ENCODE measurements at regions of chr1 and their contacts with region 1.

Region 1: DNA sequence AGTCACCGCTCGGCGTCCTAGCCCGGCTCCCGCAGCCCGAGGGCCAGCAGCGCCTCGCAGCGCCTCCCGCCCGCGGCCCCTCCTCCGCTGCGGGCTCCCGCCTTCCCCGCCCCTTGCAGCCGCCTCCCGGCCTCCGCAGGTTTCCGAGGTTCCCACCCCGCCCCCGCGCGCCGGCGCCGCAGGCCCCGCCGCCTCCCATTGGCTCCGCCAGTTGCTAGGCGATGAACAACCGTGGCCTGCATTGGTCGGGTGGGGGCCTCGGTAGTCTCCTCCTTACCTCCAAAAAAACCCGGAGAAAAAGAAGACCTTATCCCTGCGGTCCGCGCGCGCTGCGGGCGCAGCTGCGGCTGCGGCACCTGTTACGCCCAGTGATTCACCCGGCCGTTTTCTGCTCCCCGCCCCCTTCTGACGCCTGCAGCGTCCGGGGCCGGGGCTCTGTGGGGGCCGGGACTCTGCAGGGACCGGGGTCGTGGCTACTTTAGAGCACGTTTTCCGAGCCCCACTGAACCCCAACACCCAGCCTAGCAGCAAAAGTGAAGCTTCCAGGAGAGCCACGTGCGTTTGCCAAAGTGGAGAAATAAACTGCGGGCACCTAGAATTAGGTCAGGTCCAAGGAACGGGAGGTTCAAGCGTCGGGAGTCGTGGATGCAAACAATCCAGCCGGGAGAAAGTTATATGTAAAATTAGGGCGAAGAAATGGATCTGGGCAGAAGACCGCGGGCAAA is at the start of gene SSX2IP:
- DNase-seq: peak; percentile 99 to 100 (median 100)
- ATAC-seq: peak; percentile 82
- H3K4me3 ChIP-seq: peak within 1 kb of the TSS; percentile 84
- H3K4me3 Mint-ChIP-seq: peak within 1 kb of the TSS; percentile 91
- H3K27ac ChIP-seq: peak within 1 kb of the TSS; percentile 76 to 83
- H3K27ac Mint-ChIP-seq: peak within 1 kb of the TSS; percentile 88
- H3K4me1 ChIP-seq: peaks cover 29% of the 10 kb centered on the region
- H3K4me1 Mint-ChIP-seq: peaks cover 77% of the 10 kb centered on the region
- H3K27me3 ChIP-seq: no peaks in the 10 kb centered on the region
- H3K27me3 Mint-ChIP-seq: no peaks in the 10 kb centered on the region
- CTCF ChIP-seq: no peak
- total RNA-seq, gene SSX2IP: 5.5 to 6.0 TPM

Region 2: DNA sequence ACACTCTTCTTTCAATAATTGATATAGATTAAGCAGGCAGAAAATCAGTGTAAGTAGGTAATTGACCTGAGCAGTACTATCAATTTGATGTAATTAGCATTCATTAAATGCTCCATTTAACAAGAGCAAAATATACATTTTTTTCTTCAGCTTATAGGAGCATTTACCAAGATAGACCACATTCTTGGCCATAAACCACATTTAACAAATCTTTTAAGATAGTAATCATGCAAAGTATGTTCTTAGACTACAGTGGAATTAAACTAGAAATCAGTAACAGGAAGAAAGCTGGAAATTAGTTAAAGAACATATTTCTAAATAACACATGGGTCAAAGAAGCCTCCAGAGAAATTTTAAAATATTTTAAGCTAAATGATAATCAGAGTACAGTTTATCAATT is 555.2 kb before region 1 on chr1:
- CTCF ChIA-PET with region 1: no interaction called
- POLR2A ChIA-PET with region 1: no interaction called
- intact Hi-C with region 1: loop called (anchors 5 to 10 kb)
- DNase-seq: no peak
- ATAC-seq: no peak
- H3K4me3 ChIP-seq: no peak overlapping the region
- H3K4me3 Mint-ChIP-seq: no peak overlapping the region
- H3K27ac ChIP-seq: no peak overlapping the region
- H3K27ac Mint-ChIP-seq: no peak overlapping the region
- H3K4me1 ChIP-seq: no peaks in the 10 kb centered on the region
- H3K4me1 Mint-ChIP-seq: peaks cover 13% of the 10 kb centered on the region
- H3K27me3 ChIP-seq: no peaks in the 10 kb centered on the region
- H3K27me3 Mint-ChIP-seq: no peaks in the 10 kb centered on the region
- CTCF ChIP-seq: no peak

Region 3: GRCh38 chr1:84478876-84479868 is 211.4 kb before region 1 on chr1 and contains the start of gene RPF1:
- CTCF ChIA-PET with region 1: no interaction called
- POLR2A ChIA-PET with region 1: no interaction called
- intact Hi-C with region 1: loop called in 1 of 2 experiments (anchors 10 kb)
- DNase-seq: peak; percentile 58 to 91 (median 74)
- ATAC-seq: peak; percentile 93
- H3K4me3 ChIP-seq: peak within 1 kb of the TSS; percentile 84
- H3K4me3 Mint-ChIP-seq: peak within 1 kb of the TSS; percentile 97
- H3K27ac ChIP-seq: peak within 1 kb of the TSS; percentile 82 to 85
- H3K27ac Mint-ChIP-seq: peak within 1 kb of the TSS; percentile 95
- H3K4me1 ChIP-seq: peaks cover 13% of the 10 kb centered on the region
- H3K4me1 Mint-ChIP-seq: peaks cover 53% of the 10 kb centered on the region
- H3K27me3 ChIP-seq: peaks cover 3 to 12% of the 10 kb centered on the region in 2 experiments
- H3K27me3 Mint-ChIP-seq: peaks cover 33% of the 10 kb centered on the region
- CTCF ChIP-seq: no peak
- total RNA-seq, gene RPF1: 67.6 to 69.4 TPM

Region 4: GRCh38 chr1:84573967-84574842 is 116.4 kb before region 1 on chr1 and contains the start of gene CTBS:
- CTCF ChIA-PET with region 1: no interaction called
- POLR2A ChIA-PET with region 1: interaction called, 8 read pairs
- intact Hi-C with region 1: loop called (anchors 2 to 5 kb)
- DNase-seq: peak; percentile 74 to 94 (median 83)
- ATAC-seq: peak; percentile 88
- H3K4me3 ChIP-seq: peak within 1 kb of the TSS; percentile 85
- H3K4me3 Mint-ChIP-seq: peak within 1 kb of the TSS; percentile 99
- H3K27ac ChIP-seq: peak within 1 kb of the TSS; percentile 95 to 97
- H3K27ac Mint-ChIP-seq: peak within 1 kb of the TSS; percentile 100
- H3K4me1 ChIP-seq: peaks cover 22% of the 10 kb centered on the region
- H3K4me1 Mint-ChIP-seq: peaks cover 48% of the 10 kb centered on the region
- H3K27me3 ChIP-seq: peaks cover 0 to 3% of the 10 kb centered on the region in 2 experiments
- H3K27me3 Mint-ChIP-seq: no peaks in the 10 kb centered on the region
- CTCF ChIP-seq: no peak
- total RNA-seq, gene CTBS: 19.4 to 20.0 TPM

Region 5: DNA sequence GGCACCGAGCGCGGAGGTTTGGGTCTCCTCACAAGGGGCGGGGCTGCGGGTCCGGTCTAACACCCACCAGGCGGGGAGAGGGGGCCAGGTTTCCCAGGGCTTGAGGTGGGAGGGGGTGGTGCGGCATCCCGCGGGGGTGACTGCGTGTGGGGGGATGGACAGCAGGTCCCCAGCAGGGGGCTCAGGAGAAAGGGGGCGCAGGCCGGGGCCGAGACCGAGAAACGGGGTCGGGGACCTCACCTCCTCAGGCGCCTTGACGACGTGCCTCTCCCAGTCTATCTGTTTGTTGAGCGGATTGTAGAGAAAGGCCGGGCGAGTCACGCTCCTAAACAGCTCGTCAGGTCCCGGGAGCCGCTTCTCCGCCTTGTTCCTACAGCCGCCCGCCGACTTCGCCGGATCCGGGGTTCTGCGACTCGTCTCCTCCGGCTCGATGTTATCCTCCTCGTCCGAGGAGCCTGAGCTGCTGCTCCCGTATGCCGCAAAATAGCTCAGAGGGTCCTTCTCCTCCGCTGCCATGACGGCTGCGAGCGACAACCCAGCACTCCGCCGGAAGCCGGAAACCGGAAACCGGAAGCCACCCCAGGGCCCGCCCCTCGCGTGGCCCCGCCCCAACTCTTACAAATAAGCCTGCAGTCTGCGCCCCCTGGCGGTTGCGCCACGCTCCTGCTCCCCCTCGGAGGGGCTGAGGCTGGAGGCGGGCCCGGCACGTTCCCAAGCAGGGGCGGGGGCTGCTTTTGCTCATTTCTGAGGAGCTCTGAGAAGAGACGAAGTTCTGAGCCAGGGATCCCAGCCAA is 568.8 kb after region 1 on chr1 and contains the start of gene C1orf52:
- CTCF ChIA-PET with region 1: no interaction called
- POLR2A ChIA-PET with region 1: no interaction called
- intact Hi-C with region 1: loop called in 1 of 2 experiments (anchors 5 kb)
- DNase-seq: peak; percentile 92 to 99 (median 96)
- ATAC-seq: peak; percentile 93
- H3K4me3 ChIP-seq: peak within 1 kb of the TSS; percentile 88
- H3K4me3 Mint-ChIP-seq: peak within 1 kb of the TSS; percentile 99
- H3K27ac ChIP-seq: peak within 1 kb of the TSS; percentile 47 to 81
- H3K27ac Mint-ChIP-seq: peak within 1 kb of the TSS; percentile 95
- H3K4me1 ChIP-seq: peaks cover 21% of the 10 kb centered on the region
- H3K4me1 Mint-ChIP-seq: peaks cover 41% of the 10 kb centered on the region
- H3K27me3 ChIP-seq: no peaks in the 10 kb centered on the region
- H3K27me3 Mint-ChIP-seq: no peaks in the 10 kb centered on the region
- CTCF ChIP-seq: peak; percentile 97
- total RNA-seq, gene C1orf52: 62.4 to 66.6 TPM

Region 6: GRCh38 chr1:85707990-85708828 is 1017.6 kb after region 1 on chr1 and contains the start of gene ZNHIT6:
- CTCF ChIA-PET with region 1: no interaction called
- POLR2A ChIA-PET with region 1: no interaction called
- intact Hi-C with region 1: loop called in 1 of 2 experiments (anchors 5 kb)
- DNase-seq: peak; percentile 72 to 96 (median 80)
- ATAC-seq: peak; percentile 96
- H3K4me3 ChIP-seq: peak within 1 kb of the TSS; percentile 89
- H3K4me3 Mint-ChIP-seq: no peak within 1 kb of the TSS
- H3K27ac ChIP-seq: peak within 1 kb of the TSS; percentile 46 to 49
- H3K27ac Mint-ChIP-seq: no peak within 1 kb of the TSS
- H3K4me1 ChIP-seq: peaks cover 24% of the 10 kb centered on the region
- H3K4me1 Mint-ChIP-seq: peaks cover 29% of the 10 kb centered on the region
- H3K27me3 ChIP-seq: no peaks in the 10 kb centered on the region
- H3K27me3 Mint-ChIP-seq: no peaks in the 10 kb centered on the region
- CTCF ChIP-seq: no peak
- total RNA-seq, gene ZNHIT6: 10.4 to 10.8 TPM

Measured in CD4-positive, alpha-beta T cell (primary cell).